Testis (tissue), 5 donors: ENCODE measurements at regions of chr1 and their contacts with region 1.

Region 1: GRCh38 chr1:156504821-156505678 is 4.5 kb upstream of the MEF2D start:
- DNase-seq: peak; percentile 99
- H3K4me3 ChIP-seq: peak overlapping the region; percentile 12 to 48
- H3K27ac ChIP-seq: peak overlapping the region; percentile 98 to 100
- H3K4me1 ChIP-seq: peaks cover 66% of the 10 kb centered on the region
- H3K27me3 ChIP-seq: no peaks in the 10 kb centered on the region
- CTCF ChIP-seq: peak in 1 of 3 experiments; percentile 45
- POLR2A ChIP-seq: no peak

Region 2: GRCh38 chr1:156193488-156194299 is 311.4 kb before region 1 on chr1 and contains the start of gene SLC25A44:
- intact Hi-C with region 1: no loop called
- DNase-seq: peak; percentile 98
- H3K4me3 ChIP-seq: peak within 1 kb of the TSS; percentile 79 to 88
- H3K27ac ChIP-seq: peak within 1 kb of the TSS; percentile 33 to 58
- H3K4me1 ChIP-seq: peaks cover 9% of the 10 kb centered on the region
- H3K27me3 ChIP-seq: no peaks in the 10 kb centered on the region
- CTCF ChIP-seq: peak; percentile 46 to 76 (median 67)
- POLR2A ChIP-seq: no peak
- total RNA-seq, gene SLC25A44: 32.8 to 34.2 TPM

Region 3: GRCh38 chr1:156601122-156601830 is 96.2 kb after region 1 on chr1 and contains the start of gene GPATCH4:
- intact Hi-C with region 1: loop called (anchors 5 kb)
- DNase-seq: peak; percentile 95
- H3K4me3 ChIP-seq: peak within 1 kb of the TSS; percentile 62 to 81
- H3K27ac ChIP-seq: peak within 1 kb of the TSS; percentile 65 to 83
- H3K4me1 ChIP-seq: peaks cover 7% of the 10 kb centered on the region
- H3K27me3 ChIP-seq: no peaks in the 10 kb centered on the region
- CTCF ChIP-seq: no peak
- POLR2A ChIP-seq: no peak
- total RNA-seq, gene GPATCH4: 21.6 to 26.7 TPM

Region 4: GRCh38 chr1:156641761-156642264 is 136.8 kb after region 1 on chr1 and contains the start of gene BCAN:
- intact Hi-C with region 1: no loop called
- DNase-seq: peak; percentile 54
- H3K4me3 ChIP-seq: peak within 1 kb of the TSS; percentile 32 to 60
- H3K27ac ChIP-seq: no peak within 1 kb of the TSS
- H3K4me1 ChIP-seq: peaks cover 15% of the 10 kb centered on the region
- H3K27me3 ChIP-seq: no peaks in the 10 kb centered on the region
- CTCF ChIP-seq: no peak
- POLR2A ChIP-seq: no peak
- total RNA-seq, gene BCAN: 8.8 to 9.7 TPM